ENCODE measurements at regions of chr16 and their contacts with region 1.

Region 1: DNA sequence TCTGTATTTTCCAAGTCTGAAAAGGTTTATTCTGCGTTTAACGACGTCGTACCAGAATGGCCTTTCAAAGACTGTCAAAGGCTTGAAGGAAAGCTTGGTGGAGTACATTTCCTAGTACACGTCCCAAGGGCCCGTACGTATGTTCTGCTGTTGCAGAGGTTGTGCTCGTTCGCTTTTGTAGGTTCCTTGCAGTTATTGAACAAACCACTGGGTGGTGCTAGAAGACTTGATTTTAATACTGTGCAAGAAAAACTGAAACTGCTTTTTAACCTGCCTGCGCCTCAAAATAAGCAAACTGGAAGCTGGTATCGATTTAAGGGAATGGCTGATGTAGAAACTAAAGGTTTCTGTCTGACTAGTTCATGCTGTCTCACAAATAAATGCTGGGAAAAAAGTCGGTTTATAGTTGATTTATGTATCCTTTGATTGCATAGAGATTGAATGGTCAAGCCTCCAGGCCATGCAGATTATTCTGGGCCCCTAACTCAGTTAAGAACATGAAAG is 54.6 kb downstream of the USP10 start:
- DNase-seq: peak; percentile 82 to 87 (median 84)
- H3K4me3 ChIP-seq: no peak overlapping the region
- H3K4me3 Mint-ChIP-seq: peak overlapping the region; percentile 45 to 81 (median 75)
- H3K27ac ChIP-seq: peak overlapping the region; percentile 44
- H3K27ac Mint-ChIP-seq: peak overlapping the region; percentile 43 to 94 (median 88)
- H3K4me1 ChIP-seq: peaks cover 83% of the 10 kb centered on the region
- H3K4me1 Mint-ChIP-seq: peaks cover 69 to 94% (median 85%) of the 10 kb centered on the region in 4 donors
- H3K27me3 ChIP-seq: no peaks in the 10 kb centered on the region
- H3K27me3 Mint-ChIP-seq: no peaks in the 10 kb centered on the region

Region 2: GRCh38 chr16:84449171-84450140 is 304.9 kb before region 1 on chr16:
- CTCF ChIA-PET with region 1: no interaction called
- POLR2A ChIA-PET with region 1: no interaction called
- intact Hi-C with region 1: no loop called
- DNase-seq: no peak
- H3K4me3 ChIP-seq: no peak overlapping the region
- H3K4me3 Mint-ChIP-seq: no peak overlapping the region
- H3K27ac ChIP-seq: no peak overlapping the region
- H3K27ac Mint-ChIP-seq: no peak overlapping the region
- H3K4me1 ChIP-seq: no peaks in the 10 kb centered on the region
- H3K4me1 Mint-ChIP-seq: no peaks in the 10 kb centered on the region
- H3K27me3 ChIP-seq: no peaks in the 10 kb centered on the region
- H3K27me3 Mint-ChIP-seq: peaks cover 2 to 15% of the 10 kb centered on the region in 2 donors

Region 3: DNA sequence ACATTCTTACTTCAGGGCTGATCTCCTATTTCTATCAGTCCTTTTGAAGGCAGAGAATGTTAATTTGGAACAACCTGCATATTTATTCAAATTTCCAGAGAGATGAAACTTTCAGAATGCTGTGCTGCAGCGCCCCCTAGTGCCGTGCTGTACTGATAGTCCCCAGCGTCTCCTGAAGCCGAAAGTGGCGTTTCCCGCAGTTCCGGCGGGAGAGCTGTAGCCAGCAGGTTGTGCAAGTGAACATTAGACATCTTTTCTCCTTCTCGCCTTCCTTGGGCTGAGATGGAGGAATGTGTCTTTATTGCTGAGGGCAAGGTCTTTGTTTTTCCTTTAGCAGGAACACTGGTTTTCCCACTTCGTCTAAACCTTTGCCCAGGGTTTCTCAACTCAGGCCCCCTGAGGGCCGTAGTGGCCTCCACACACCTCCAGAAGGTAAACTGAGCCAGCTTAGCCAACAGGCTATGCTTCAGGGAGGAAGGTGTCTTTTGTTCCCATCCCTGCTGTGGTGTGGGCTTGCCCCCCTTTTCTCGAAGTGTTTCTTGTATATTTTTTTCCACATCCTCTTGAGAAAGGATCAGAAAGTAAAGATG is 28.2 kb before region 1 on chr16:
- CTCF ChIA-PET with region 1: interaction called, 10 read pairs
- POLR2A ChIA-PET with region 1: interaction called, 3 read pairs
- intact Hi-C with region 1: no loop called
- DNase-seq: peak; percentile 70 to 80 (median 76)
- H3K4me3 ChIP-seq: no peak overlapping the region
- H3K4me3 Mint-ChIP-seq: peak overlapping the region in 6 of 8 donors; percentile 33 to 76 (median 56)
- H3K27ac ChIP-seq: no peak overlapping the region
- H3K27ac Mint-ChIP-seq: peak overlapping the region in 4 of 7 donors; percentile 45 to 66 (median 52)
- H3K4me1 ChIP-seq: peaks cover 47% of the 10 kb centered on the region
- H3K4me1 Mint-ChIP-seq: peaks cover 40 to 67% (median 57%) of the 10 kb centered on the region in 4 donors
- H3K27me3 ChIP-seq: no peaks in the 10 kb centered on the region
- H3K27me3 Mint-ChIP-seq: no peaks in the 10 kb centered on the region

Region 4: DNA sequence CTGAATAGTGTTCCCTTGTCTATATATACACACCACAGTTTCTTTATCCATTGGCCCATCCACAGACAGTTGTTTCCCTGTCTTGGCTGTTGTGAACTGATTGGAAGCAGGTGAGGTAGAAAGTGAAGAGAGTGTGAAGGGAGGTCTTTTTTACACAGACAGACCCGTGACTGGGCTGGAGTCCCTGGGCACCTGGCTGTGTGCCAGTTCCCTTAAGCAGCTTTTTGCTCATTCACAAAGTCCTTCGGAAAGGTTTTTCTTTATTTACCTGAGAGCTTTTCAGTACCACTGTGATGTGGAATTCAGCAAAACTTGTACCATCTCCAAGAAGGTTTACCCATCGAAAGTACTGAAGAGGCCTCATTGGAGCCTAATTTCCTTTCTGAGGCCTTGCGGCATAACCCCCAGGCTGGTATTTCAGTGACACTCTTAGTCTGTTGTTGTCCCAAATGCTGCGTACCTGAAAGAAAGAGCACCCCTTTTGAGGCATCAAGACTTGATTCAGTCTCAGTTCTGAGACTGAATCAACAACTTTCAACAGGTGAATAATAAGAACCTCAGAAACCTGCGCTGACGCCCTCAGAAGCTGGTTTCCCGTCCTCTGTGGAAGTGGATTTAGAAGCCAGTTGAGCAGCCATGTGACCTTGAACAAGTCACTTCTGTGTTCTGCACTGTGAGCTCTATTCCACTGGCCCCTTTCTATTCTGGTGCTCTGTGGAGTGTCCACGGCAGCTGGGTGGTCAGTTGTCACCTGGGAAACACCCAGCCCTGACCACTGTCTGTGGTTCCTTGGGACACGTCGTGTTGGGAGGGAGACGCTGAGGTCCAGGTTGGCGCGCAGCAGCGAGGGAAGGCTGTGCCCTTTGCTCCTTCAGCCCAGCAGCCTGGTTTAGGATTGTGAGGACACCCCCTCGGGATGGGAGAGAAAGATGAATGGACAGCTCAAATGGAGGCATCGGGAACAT is 11.5 kb after region 1 on chr16:
- CTCF ChIA-PET with region 1: interaction called, 68 read pairs
- POLR2A ChIA-PET with region 1: interaction called, 45 read pairs
- intact Hi-C with region 1: no loop called
- DNase-seq: peak; percentile 36 to 65 (median 55)
- H3K4me3 ChIP-seq: no peak overlapping the region
- H3K4me3 Mint-ChIP-seq: peak overlapping the region; percentile 43 to 90 (median 80)
- H3K27ac ChIP-seq: peak overlapping the region; percentile 44
- H3K27ac Mint-ChIP-seq: peak overlapping the region; percentile 85 to 98 (median 95)
- H3K4me1 ChIP-seq: peaks cover 51% of the 10 kb centered on the region
- H3K4me1 Mint-ChIP-seq: peaks cover 46 to 71% (median 58%) of the 10 kb centered on the region in 4 donors
- H3K27me3 ChIP-seq: no peaks in the 10 kb centered on the region
- H3K27me3 Mint-ChIP-seq: no peaks in the 10 kb centered on the region

Region 5: GRCh38 chr16:84785843-84786581 is 31.6 kb after region 1 on chr16:
- CTCF ChIA-PET with region 1: interaction called, 6 read pairs
- POLR2A ChIA-PET with region 1: interaction called, 3 read pairs
- intact Hi-C with region 1: loop called (anchors 2 kb)
- DNase-seq: no peak
- H3K4me3 ChIP-seq: no peak overlapping the region
- H3K4me3 Mint-ChIP-seq: no peak overlapping the region
- H3K27ac ChIP-seq: no peak overlapping the region
- H3K27ac Mint-ChIP-seq: no peak overlapping the region
- H3K4me1 ChIP-seq: no peaks in the 10 kb centered on the region
- H3K4me1 Mint-ChIP-seq: peaks cover 0 to 1% (median 0%) of the 10 kb centered on the region in 4 donors
- H3K27me3 ChIP-seq: no peaks in the 10 kb centered on the region
- H3K27me3 Mint-ChIP-seq: no peaks in the 10 kb centered on the region

Region 6: GRCh38 chr16:84925092-84925772 is 170.8 kb after region 1 on chr16:
- CTCF ChIA-PET with region 1: interaction called, 11 read pairs
- POLR2A ChIA-PET with region 1: no interaction called
- intact Hi-C with region 1: loop called (anchors 1 kb)
- DNase-seq: peak; percentile 49 to 56 (median 55)
- H3K4me3 ChIP-seq: no peak overlapping the region
- H3K4me3 Mint-ChIP-seq: no peak overlapping the region
- H3K27ac ChIP-seq: no peak overlapping the region
- H3K27ac Mint-ChIP-seq: no peak overlapping the region
- H3K4me1 ChIP-seq: peaks cover 2% of the 10 kb centered on the region
- H3K4me1 Mint-ChIP-seq: peaks cover 0 to 3% (median under 1%) of the 10 kb centered on the region in 4 donors
- H3K27me3 ChIP-seq: no peaks in the 10 kb centered on the region
- H3K27me3 Mint-ChIP-seq: peaks cover 0 to 2% of the 10 kb centered on the region in 2 donors

Region 7: GRCh38 chr16:84970447-84971127 is 216.2 kb after region 1 on chr16:
- CTCF ChIA-PET with region 1: interaction called, 92 read pairs
- POLR2A ChIA-PET with region 1: interaction called, 4 read pairs
- intact Hi-C with region 1: loop called (anchors 1 kb)
- DNase-seq: peak; percentile 72 to 81 (median 75)
- H3K4me3 ChIP-seq: no peak overlapping the region
- H3K4me3 Mint-ChIP-seq: peak overlapping the region in 3 of 8 donors; percentile 1 to 41 (median 15)
- H3K27ac ChIP-seq: no peak overlapping the region
- H3K27ac Mint-ChIP-seq: peak overlapping the region in 6 of 7 donors; percentile 22 to 74 (median 64)
- H3K4me1 ChIP-seq: peaks cover 7% of the 10 kb centered on the region
- H3K4me1 Mint-ChIP-seq: peaks cover 4 to 6% (median 5%) of the 10 kb centered on the region in 4 donors
- H3K27me3 ChIP-seq: no peaks in the 10 kb centered on the region
- H3K27me3 Mint-ChIP-seq: no peaks in the 10 kb centered on the region

Measured in CD4-positive, alpha-beta memory T cell (primary cell).